Activated B cell treated with CpG ODN at 0.5 μM for 24 hours (primary cell): ENCODE measurements at regions of chr13 and their contacts with region 1.

Region 1: DNA sequence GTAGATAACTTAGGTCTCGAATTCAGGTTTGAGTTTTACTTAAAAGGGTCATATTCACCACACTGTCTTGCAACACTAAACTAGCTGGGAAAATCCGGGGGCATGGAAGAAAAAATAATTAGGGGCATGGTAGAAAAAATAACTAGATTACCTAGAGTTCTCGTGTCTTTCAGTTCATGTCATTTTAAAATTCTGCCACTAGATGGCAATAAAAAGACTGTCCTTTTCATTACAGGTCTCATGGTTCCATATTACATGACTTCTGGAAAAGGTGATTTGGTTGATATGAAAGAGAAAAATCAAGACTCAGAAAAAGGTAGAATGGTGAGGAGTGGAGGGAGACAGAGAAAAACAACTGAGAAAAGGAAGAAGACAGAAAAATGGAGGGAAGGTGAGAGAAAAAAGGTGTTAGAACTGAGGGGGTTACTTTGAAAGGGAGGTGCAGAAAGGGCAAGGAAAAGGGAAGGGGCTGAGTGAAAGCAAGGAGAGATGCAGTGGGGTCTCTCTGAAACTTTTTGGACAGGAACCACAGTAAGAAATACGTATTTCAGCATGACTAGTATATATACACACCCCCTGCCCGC is 299.0 kb downstream of the KLF12 start:
- DNase-seq: no peak
- ATAC-seq: peak; percentile 67
- H3K4me3 Mint-ChIP-seq: no peak overlapping the region
- H3K27ac Mint-ChIP-seq: no peak overlapping the region
- H3K4me1 Mint-ChIP-seq: peaks cover 9% of the 10 kb centered on the region
- H3K27me3 Mint-ChIP-seq: no peaks in the 10 kb centered on the region
- CTCF ChIP-seq: no peak

Region 2: DNA sequence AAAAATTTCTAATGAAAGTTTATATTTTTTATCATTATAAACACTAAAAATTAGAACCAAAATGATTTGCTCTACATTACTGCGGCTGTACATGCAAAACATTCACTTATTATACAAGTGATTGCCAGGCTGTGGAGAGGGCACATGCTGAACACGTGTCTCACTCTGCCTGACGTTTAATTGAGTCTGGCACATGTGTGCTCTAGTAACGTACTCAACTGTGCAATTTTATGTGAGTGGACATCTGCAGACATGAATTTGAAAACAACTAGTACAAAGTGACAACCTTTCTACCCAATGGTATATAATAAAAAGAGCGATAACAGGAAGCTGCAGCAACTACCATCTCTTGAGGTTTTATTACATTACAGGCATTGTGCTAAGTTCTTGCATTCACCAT is 42.4 kb before region 1 on chr13:
- CTCF ChIA-PET with region 1: no interaction called
- POLR2A ChIA-PET with region 1: no interaction called
- intact Hi-C with region 1: no loop called
- DNase-seq: no peak
- ATAC-seq: no peak
- H3K4me3 Mint-ChIP-seq: no peak overlapping the region
- H3K27ac Mint-ChIP-seq: no peak overlapping the region
- H3K4me1 Mint-ChIP-seq: peaks cover 2% of the 10 kb centered on the region
- H3K27me3 Mint-ChIP-seq: no peaks in the 10 kb centered on the region
- CTCF ChIP-seq: no peak

Region 3: GRCh38 chr13:73898276-73898675 is 63.0 kb after region 1 on chr13:
- CTCF ChIA-PET with region 1: no interaction called
- POLR2A ChIA-PET with region 1: no interaction called
- intact Hi-C with region 1: no loop called
- DNase-seq: no peak
- ATAC-seq: peak; percentile 34
- H3K4me3 Mint-ChIP-seq: no peak overlapping the region
- H3K27ac Mint-ChIP-seq: no peak overlapping the region
- H3K4me1 Mint-ChIP-seq: peaks cover 39% of the 10 kb centered on the region
- H3K27me3 Mint-ChIP-seq: no peaks in the 10 kb centered on the region
- CTCF ChIP-seq: no peak

Region 4: DNA sequence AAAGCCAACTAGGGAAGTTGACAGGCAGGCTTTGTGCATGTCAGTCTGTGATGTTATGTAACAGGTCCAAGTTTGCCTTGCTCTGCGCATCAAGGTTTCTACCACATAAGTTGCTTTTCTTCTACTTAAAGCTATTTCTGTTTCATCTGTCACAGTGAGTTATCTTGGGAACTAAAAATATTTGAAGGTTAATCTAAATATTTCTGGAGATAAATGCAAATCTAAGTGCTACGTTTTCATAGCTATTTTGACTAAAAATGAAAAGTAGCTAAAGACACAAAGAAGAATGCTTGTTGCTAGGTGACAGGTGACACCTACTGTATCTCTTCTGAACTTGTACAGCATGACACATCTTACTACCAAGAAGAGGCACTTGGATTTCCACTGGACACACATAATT is 163.4 kb after region 1 on chr13:
- CTCF ChIA-PET with region 1: no interaction called
- POLR2A ChIA-PET with region 1: no interaction called
- intact Hi-C with region 1: loop called (anchors 5 kb)
- DNase-seq: no peak
- ATAC-seq: peak; percentile 47
- H3K4me3 Mint-ChIP-seq: no peak overlapping the region
- H3K27ac Mint-ChIP-seq: peak overlapping the region; percentile 32
- H3K4me1 Mint-ChIP-seq: peaks cover 43% of the 10 kb centered on the region
- H3K27me3 Mint-ChIP-seq: no peaks in the 10 kb centered on the region
- CTCF ChIP-seq: no peak

Region 5: GRCh38 chr13:74040200-74040599 is 205.0 kb after region 1 on chr13:
- CTCF ChIA-PET with region 1: interaction called, 3 read pairs
- POLR2A ChIA-PET with region 1: no interaction called
- intact Hi-C with region 1: loop called (anchors 1 kb)
- DNase-seq: no peak
- ATAC-seq: peak; percentile 80
- H3K4me3 Mint-ChIP-seq: no peak overlapping the region
- H3K27ac Mint-ChIP-seq: no peak overlapping the region
- H3K4me1 Mint-ChIP-seq: peaks cover 55% of the 10 kb centered on the region
- H3K27me3 Mint-ChIP-seq: no peaks in the 10 kb centered on the region
- CTCF ChIP-seq: no peak

Region 6: DNA sequence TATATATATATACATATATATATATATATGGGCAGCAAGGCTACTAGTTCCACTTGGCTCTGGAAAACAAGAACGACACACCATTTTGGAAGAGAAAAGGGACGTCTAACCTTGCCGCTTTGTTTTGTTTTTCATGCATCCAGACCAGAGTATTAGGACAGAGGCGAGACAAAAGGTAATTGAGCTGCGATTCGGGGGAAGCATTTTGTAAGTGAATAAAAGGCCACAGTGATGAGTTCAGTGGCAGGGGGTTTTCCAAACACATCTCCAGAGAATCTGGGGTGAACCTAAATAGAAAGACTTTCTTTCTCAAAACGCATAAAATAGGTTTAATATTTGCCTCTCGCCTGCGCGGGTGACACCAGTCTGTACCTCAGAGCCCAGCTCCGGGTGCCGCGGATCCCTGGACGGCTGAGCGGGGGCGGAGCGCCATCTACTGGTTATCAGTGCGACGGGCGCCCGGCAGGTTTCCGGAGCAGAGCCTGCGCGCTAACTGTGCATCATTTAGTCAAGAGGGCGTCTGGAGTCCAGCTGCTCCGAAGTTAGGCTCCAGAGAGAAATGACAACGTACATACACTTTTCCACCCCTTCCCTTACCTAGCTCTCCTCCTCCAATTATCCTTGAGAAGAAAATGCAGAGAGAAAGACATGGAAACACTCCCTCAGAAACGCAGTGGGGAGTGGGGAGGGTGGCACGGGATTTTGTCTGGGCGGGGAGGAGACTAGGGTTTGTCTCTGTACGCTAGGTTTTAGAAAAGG is 1384.4 kb after region 1 on chr13:
- CTCF ChIA-PET with region 1: interaction called, 13 read pairs
- POLR2A ChIA-PET with region 1: no interaction called
- intact Hi-C with region 1: loop called (anchors 1 kb)
- DNase-seq: peak; percentile 65
- ATAC-seq: peak; percentile 83
- H3K4me3 Mint-ChIP-seq: peak overlapping the region; percentile 36
- H3K27ac Mint-ChIP-seq: no peak overlapping the region
- H3K4me1 Mint-ChIP-seq: peaks cover 6% of the 10 kb centered on the region
- H3K27me3 Mint-ChIP-seq: peaks cover 18% of the 10 kb centered on the region
- CTCF ChIP-seq: peak; percentile 69